Natural killer cell (primary cell): ENCODE measurements at regions of chr10 and their contacts with region 1.

Region 1: DNA sequence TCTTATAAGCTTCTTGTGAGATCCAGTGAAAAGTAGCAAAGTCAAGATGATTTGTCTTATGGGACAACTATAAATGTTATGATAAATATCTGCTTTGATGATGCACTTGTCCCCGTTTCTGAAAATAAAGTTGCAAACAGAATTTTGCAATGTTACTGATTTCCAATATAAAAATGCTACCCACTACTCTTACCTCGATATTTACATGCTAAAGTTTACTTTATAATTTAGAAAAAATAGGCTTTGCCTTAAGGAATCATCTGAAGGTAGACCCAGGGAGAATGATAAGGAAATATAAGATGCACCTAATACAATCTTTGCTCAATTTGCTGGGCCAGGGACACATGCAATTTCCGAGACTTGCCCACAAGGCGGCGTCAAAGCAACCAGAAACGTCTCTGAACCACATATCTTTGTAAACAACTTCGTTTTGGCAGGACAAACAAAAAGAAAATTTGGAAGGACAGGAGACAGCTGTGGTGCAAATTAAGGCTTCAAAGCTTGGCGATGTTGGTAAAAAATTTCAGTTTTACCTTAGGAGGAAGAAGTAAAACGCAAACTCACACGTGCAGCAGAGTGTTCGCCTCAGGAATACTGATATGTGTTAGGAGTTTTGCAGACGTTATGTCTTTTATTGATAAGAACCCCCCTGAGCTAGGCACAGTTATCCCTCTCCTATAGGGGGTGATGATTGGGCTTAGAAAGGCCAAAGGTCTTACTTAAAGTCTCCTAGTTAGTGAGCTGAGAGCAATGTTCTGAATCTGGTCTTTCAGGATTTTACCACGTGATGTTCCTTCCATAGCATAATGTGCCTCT is 134.4 kb downstream of the PRKCQ start:
- DNase-seq: peak; percentile 58 to 80
- ATAC-seq: peak in 2 of 3 donors; percentile 72 to 79
- H3K4me3 ChIP-seq: no peak overlapping the region
- H3K4me3 Mint-ChIP-seq: peak overlapping the region; percentile 61
- H3K27ac ChIP-seq: peak overlapping the region; percentile 2
- H3K27ac Mint-ChIP-seq: peak overlapping the region; percentile 78 to 86
- H3K4me1 ChIP-seq: peaks cover 4% of the 10 kb centered on the region
- H3K4me1 Mint-ChIP-seq: peaks cover 29 to 33% of the 10 kb centered on the region in 2 donors
- H3K27me3 ChIP-seq: no peaks in the 10 kb centered on the region
- H3K27me3 Mint-ChIP-seq: no peaks in the 10 kb centered on the region
- CTCF ChIP-seq: peak; percentile 81

Region 2: DNA sequence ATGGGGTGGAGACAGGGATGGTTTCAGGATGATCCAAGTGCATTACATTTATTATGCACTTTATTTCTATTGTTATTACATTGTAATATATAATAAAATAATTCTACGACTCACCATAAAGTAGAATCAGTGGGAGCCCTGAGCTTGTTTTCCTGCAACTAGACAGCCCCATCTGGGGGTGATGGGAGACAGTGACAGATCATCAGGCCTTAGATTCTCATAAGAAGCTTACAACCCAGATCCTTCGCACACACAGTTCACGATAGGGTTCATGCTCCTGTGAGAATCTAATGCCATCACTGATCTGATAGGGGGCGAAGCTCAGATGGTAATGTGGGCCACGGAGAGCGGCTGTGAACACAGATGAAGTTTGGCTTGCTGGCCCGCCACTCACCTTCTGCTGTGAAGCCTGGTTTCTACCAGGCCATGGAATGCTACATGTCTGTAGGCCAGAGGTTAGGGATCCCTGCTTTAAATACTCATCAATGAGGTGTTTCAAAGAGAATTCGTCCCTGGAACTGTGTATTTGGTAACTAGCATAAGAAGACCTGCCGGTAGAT is 155.6 kb after region 1 on chr10:
- intact Hi-C with region 1: loop called (anchors 1 kb)
- DNase-seq: peak in 1 of 2 donors; percentile 58
- ATAC-seq: peak in 1 of 3 donors; percentile 29
- H3K4me3 ChIP-seq: no peak overlapping the region
- H3K4me3 Mint-ChIP-seq: no peak overlapping the region
- H3K27ac ChIP-seq: no peak overlapping the region
- H3K27ac Mint-ChIP-seq: peak overlapping the region in 1 of 2 donors; percentile 25
- H3K4me1 ChIP-seq: peaks cover 14% of the 10 kb centered on the region
- H3K4me1 Mint-ChIP-seq: peaks cover 22 to 37% of the 10 kb centered on the region in 2 donors
- H3K27me3 ChIP-seq: no peaks in the 10 kb centered on the region
- H3K27me3 Mint-ChIP-seq: no peaks in the 10 kb centered on the region
- CTCF ChIP-seq: peak; percentile 45

Region 3: GRCh38 chr10:6647811-6648526 is 202.3 kb after region 1 on chr10:
- intact Hi-C with region 1: loop called (anchors 1 kb)
- DNase-seq: peak; percentile 45 to 86
- ATAC-seq: peak; percentile 88 to 95 (median 93)
- H3K4me3 ChIP-seq: no peak overlapping the region
- H3K4me3 Mint-ChIP-seq: no peak overlapping the region
- H3K27ac ChIP-seq: no peak overlapping the region
- H3K27ac Mint-ChIP-seq: peak overlapping the region; percentile 33 to 51
- H3K4me1 ChIP-seq: peaks cover 7% of the 10 kb centered on the region
- H3K4me1 Mint-ChIP-seq: peaks cover 17 to 18% of the 10 kb centered on the region in 2 donors
- H3K27me3 ChIP-seq: no peaks in the 10 kb centered on the region
- H3K27me3 Mint-ChIP-seq: peaks cover 0 to under 1% of the 10 kb centered on the region in 2 donors
- CTCF ChIP-seq: peak; percentile 94

Region 4: DNA sequence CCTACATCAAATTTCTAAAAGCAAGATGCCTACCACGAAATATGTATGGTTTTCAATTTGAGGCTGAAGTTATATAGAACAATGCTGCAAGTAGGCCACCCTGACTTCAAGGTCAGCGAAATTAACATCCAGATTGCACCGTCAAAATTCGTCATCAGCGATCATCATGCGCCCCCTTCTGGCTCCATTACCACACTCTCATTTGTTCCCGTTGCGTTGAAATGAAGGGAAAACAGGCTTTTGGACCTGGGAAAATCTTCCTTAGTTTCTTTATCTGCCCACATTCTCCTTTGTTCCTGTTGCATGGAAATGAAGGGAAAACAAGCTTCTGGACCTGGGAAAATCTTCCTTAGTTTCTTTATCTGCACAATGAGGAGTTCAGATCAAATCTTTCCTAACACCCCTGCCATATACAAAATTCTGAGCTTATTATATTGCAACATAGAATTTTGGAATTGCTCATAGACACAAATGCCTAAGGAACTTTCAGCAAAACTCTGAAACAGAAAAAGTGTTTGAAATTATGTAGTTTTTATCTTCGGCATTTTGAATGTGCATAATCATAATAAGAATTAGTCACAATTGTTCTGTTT is 232.6 kb after region 1 on chr10:
- intact Hi-C with region 1: loop called (anchors 1 kb)
- DNase-seq: peak; percentile 44 to 84
- ATAC-seq: peak; percentile 56 to 69 (median 67)
- H3K4me3 ChIP-seq: no peak overlapping the region
- H3K4me3 Mint-ChIP-seq: no peak overlapping the region
- H3K27ac ChIP-seq: no peak overlapping the region
- H3K27ac Mint-ChIP-seq: no peak overlapping the region
- H3K4me1 ChIP-seq: no peaks in the 10 kb centered on the region
- H3K4me1 Mint-ChIP-seq: peaks cover 4 to 5% of the 10 kb centered on the region in 2 donors
- H3K27me3 ChIP-seq: peaks cover 4% of the 10 kb centered on the region
- H3K27me3 Mint-ChIP-seq: peaks cover 19 to 52% of the 10 kb centered on the region in 2 donors
- CTCF ChIP-seq: peak; percentile 78